Cardiac septum (tissue), 1 donor: ENCODE measurements at regions of chr3 and their contacts with region 1.

Region 1: GRCh38 chr3:40780291-40780924 is 255.6 kb downstream of the ZNF621 start:
- DNase-seq: peak; percentile 89

Region 2: DNA sequence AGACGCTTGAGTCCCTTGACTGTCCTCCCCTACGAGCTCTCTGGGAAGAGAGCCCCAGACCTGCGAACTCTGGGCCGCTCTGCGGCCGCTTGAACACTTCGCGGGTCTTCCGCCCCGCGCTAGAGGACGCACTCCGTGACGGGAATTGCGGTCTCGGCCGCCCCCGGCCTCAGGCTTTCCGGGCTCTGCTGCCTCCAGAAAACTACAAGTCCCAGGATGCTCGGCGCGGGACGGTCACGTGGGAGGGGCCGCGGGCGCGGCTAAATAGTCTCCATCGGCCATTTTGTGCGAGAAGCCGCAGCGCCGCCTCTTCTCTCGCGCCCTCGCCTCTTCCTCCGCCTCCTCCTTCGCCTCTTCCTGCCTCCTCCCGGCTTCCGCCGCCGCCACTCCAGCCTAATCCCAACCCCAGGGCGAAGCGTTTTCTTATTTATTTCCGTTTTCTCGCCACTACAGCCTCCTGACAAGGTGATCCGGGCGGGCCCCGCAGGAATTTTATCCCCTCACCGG is 470.9 kb before region 1 on chr3 and contains the start of gene EIF1B:
- intact Hi-C with region 1: no loop called
- DNase-seq: peak; percentile 100
- total RNA-seq, gene EIF1B: 261 TPM

Region 3: GRCh38 chr3:40690749-40691451 is 89.5 kb before region 1 on chr3:
- intact Hi-C with region 1: loop called (anchors 2 kb)
- DNase-seq: peak; percentile 81

Region 4: GRCh38 chr3:40817017-40817416 is 36.6 kb after region 1 on chr3:
- intact Hi-C with region 1: no loop called
- DNase-seq: no peak

Region 5: DNA sequence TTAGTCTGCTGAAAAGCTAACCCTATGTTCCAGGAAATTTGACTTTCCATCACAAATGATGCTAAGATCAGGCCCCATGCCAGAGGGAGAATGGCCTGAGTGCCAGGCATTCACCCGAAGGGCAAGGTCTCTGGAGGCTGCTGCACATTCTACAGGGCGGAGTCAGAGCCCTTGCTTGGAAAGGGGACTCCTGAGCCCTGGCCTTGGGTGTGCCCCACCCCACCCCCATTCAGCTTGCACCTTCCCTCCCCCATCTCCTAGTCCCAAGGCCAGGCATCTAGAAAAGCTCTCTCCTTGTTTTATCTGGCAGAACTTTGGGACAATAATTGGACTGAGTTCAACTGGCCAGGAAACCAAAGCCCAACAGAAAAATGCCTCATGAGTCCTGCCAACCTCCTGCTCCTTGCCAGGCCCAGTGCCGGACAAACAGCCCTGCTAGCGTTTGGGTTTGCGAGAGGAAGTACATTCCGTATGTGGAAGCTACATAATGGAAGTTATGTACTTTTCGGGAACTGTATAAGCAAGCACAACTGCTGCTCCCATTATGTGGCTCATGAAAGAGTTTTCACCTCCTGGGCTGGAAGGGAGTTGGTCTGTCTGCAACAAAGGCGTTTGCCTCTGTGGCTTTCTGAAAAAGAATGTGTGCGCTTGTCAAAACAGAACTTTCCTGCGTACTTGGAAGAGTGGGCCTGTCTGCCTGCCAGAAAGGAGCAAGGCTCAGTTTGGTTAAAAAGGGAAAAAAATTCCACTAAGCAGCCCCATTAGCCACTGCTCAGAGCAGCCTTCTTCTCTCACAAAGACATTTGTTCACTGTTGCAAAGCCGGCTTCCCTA is 97.4 kb after region 1 on chr3:
- intact Hi-C with region 1: loop called (anchors 2 kb)
- DNase-seq: peak; percentile 82

Region 6: DNA sequence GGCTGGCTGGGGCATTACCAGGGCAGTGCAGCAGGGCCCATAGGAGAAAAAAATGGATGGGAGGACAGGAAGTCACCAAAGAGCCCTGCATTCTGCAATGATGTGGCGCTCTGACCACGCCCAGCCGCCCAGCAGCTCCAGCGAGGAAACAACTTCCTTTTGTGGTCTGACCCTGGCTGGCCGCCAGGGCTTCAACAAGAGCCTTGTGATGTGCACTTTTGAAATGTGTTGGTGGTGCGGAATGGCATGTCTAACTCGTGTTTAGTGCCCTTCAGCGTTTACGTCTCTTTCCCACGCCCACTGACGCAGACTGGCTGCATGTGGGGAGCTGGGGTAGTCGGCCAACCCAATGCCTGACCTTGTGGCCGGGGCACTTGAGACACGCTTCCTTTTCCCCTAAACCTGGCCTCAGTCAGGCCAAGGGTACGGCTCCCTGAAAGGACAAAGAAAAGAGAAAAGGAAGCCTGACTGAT is 337.0 kb after region 1 on chr3:
- intact Hi-C with region 1: loop called (anchors 5 kb)
- DNase-seq: peak; percentile 94

Region 7: GRCh38 chr3:41198950-41199865 is 418.8 kb after region 1 on chr3 and contains the start of gene CTNNB1:
- intact Hi-C with region 1: loop called (anchors 2 kb)
- DNase-seq: peak; percentile 96
- total RNA-seq, gene CTNNB1: 171 TPM